ENCODE measurements at regions of chr10 and their contacts with region 1.

Region 1: GRCh38 chr10:3467052-3467951 is 294.7 kb upstream of the PITRM1 start:
- DNase-seq: peak; percentile 93
- ATAC-seq: peak; percentile 83
- H3K4me3 ChIP-seq: peak overlapping the region; percentile 35 to 41
- H3K27ac ChIP-seq: peak overlapping the region; percentile 81
- H3K4me1 ChIP-seq: peaks cover 29 to 33% of the 10 kb centered on the region in 2 experiments
- H3K27me3 ChIP-seq: no peaks in the 10 kb centered on the region
- CTCF ChIP-seq: peak; percentile 75 to 98 (median 88)
- POLR2A ChIP-seq: no peak
- RAD21 ChIP-seq: peak; percentile 86

Region 2: GRCh38 chr10:3248888-3249758 is 218.2 kb before region 1 on chr10:
- CTCF ChIA-PET with region 1: no interaction called
- POLR2A ChIA-PET with region 1: no interaction called
- RAD21 ChIA-PET with region 1: no interaction called
- intact Hi-C with region 1: loop called (anchors 5 kb)
- DNase-seq: peak; percentile 75
- ATAC-seq: peak; percentile 85
- H3K4me3 ChIP-seq: peak overlapping the region in 1 of 2 experiments; percentile 16; a peak in 2 of 4 replicates
- H3K27ac ChIP-seq: peak overlapping the region; percentile 19; the same call in 1 of the 2 replicates
- H3K4me1 ChIP-seq: peaks cover 0 to 15% of the 10 kb centered on the region in 2 experiments; a peak in 2 of 4 replicates
- H3K27me3 ChIP-seq: peaks cover 12% of the 10 kb centered on the region; the same call in 1 of the 2 replicates
- CTCF ChIP-seq: no peak
- POLR2A ChIP-seq: no peak
- RAD21 ChIP-seq: no peak

Region 3: DNA sequence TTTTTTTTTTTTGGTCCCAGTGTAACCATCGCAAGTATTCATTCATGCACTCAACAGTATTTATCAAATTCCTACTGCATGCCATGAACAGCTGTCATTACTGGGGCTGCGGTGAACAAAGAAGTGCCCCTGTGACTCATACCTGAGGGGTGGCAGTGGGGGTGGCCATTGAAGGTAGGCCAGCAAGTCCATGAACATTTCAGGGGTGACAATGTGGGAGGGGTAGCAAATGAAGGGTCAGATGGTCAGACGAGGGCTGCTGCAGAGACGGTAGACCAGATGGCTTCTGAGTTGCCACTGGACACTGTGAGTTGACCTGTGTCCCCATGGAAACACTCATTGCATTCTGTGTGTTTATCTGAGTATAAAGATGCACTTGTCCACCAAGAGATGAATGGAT is 202.2 kb before region 1 on chr10:
- CTCF ChIA-PET with region 1: no interaction called
- POLR2A ChIA-PET with region 1: no interaction called
- RAD21 ChIA-PET with region 1: no interaction called
- intact Hi-C with region 1: no loop called
- DNase-seq: no peak
- ATAC-seq: peak; percentile 38; the same call in 1 of the 2 replicates
- H3K4me3 ChIP-seq: no peak overlapping the region
- H3K27ac ChIP-seq: no peak overlapping the region
- H3K4me1 ChIP-seq: peaks cover 0 to 10% of the 10 kb centered on the region in 2 experiments; a peak in 2 of 4 replicates
- H3K27me3 ChIP-seq: no peaks in the 10 kb centered on the region
- CTCF ChIP-seq: no peak
- POLR2A ChIP-seq: no peak
- RAD21 ChIP-seq: no peak

Region 4: GRCh38 chr10:3605882-3606281 is 138.6 kb after region 1 on chr10:
- CTCF ChIA-PET with region 1: no interaction called
- POLR2A ChIA-PET with region 1: no interaction called
- RAD21 ChIA-PET with region 1: no interaction called
- intact Hi-C with region 1: no loop called
- DNase-seq: no peak
- ATAC-seq: no peak
- H3K4me3 ChIP-seq: no peak overlapping the region
- H3K27ac ChIP-seq: no peak overlapping the region
- H3K4me1 ChIP-seq: no peaks in the 10 kb centered on the region
- H3K27me3 ChIP-seq: no peaks in the 10 kb centered on the region
- CTCF ChIP-seq: no peak
- POLR2A ChIP-seq: no peak
- RAD21 ChIP-seq: no peak

Region 5: GRCh38 chr10:4663162-4663904 is 1196.0 kb after region 1 on chr10:
- CTCF ChIA-PET with region 1: no interaction called
- POLR2A ChIA-PET with region 1: no interaction called
- RAD21 ChIA-PET with region 1: no interaction called
- intact Hi-C with region 1: loop called (anchors 10 kb)
- DNase-seq: peak; percentile 97
- ATAC-seq: peak; percentile 96
- H3K4me3 ChIP-seq: peak overlapping the region in 1 of 2 experiments; percentile 39; a peak in 3 of 4 replicates
- H3K27ac ChIP-seq: peak overlapping the region; percentile 81
- H3K4me1 ChIP-seq: peaks cover 20 to 37% of the 10 kb centered on the region in 2 experiments
- H3K27me3 ChIP-seq: no peaks in the 10 kb centered on the region
- CTCF ChIP-seq: no peak
- POLR2A ChIP-seq: peak; percentile 19
- RAD21 ChIP-seq: peak; percentile 35; the same call in 1 of the 2 replicates

Measured in HCT116 (cell line).